ENCODE measurements at regions of chr5 and their contacts with region 1.

Region 1: DNA sequence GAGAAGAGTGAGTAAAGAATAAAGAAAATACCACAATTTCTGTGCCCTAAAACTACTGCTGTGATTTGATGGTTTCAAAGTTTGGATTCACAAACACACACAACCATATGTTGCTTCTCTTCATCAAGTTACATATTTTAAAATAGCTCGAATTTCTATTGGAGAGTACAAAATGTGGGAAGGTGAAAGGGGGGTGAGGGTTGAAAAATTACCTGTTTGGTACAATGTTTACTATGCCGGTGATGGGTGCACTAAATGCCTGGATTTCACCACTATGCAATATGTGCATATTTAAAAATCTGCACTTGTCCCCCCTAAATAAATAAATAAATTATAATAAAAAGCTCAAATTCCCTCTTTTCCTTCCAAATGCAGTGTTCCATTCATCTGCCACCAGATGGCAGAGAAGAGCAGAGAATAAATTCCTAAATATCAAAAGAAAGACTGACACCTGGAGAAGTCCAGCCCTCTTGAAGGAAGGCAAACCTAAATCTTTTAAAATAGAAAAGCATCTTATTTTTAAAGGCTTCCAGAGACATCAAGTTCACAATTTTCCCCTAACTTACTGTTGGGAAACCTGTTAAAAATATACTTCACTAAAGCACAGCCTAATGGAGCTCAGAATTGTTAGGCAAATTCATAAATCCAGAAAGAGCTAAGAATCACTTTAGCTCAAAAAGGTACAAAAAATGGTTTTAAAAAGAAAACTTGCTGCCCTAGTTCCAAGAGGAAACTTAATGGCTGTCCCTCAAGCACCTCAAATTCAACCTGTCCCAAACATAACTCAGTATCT is 24.8 kb upstream of the HNRNPA0 start:
- DNase-seq: peak; percentile 59
- H3K4me3 ChIP-seq: no peak overlapping the region
- H3K27ac ChIP-seq: no peak overlapping the region
- H3K4me1 ChIP-seq: no peaks in the 10 kb centered on the region
- H3K27me3 ChIP-seq: peaks cover 7 to 13% of the 10 kb centered on the region in 2 experiments
- CTCF ChIP-seq: peak; percentile 50 to 51
- POLR2A ChIP-seq: no peak

Region 2: DNA sequence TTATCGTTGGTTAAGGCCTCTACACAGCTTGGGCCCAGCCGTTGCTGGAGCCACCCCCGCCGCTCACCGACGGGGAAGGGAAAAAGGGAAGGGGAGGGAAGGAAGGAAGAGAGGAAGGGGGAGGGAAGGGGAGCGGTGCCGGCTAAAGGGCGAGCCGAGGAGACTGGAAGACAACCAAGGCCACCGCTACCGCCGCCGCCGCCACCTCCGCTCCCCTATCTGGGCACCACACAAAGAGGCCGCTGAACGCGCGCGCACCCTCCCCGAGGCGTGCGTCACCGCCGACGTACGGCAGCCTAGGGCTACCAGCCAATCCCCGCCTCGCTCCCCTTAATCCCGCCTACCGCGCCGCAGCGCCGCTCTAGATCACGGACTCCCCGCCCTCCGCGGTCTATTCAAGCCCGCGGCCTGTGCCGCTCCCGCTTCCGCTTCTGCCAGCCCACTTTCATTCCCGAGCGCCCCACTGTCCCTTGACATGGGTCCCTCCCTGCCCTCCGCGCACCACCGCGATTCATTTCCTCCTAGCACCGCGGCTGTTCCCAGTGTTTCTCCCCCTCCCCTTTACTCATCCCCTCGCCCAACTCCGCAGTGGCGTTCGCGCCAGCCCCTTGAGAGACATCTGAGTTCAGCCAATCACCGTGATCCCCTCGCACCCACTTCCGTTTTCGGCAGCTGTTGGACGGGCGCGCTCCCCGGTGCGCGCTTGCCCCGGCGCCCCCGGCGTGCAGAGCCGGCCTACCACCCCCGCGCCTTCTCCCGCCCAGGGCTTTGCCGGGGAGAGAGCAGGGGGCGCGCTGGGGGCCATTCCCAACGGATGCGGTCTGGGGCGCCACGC is 24.6 kb before region 1 on chr5 and contains the start of gene HNRNPA0:
- CTCF ChIA-PET with region 1: interaction called, 50 read pairs
- POLR2A ChIA-PET with region 1: interaction called, 3 read pairs
- dilution Hi-C with region 1: no loop called
- intact Hi-C with region 1: no loop called
- DNase-seq: peak; percentile 98
- H3K4me3 ChIP-seq: peak within 1 kb of the TSS; percentile 88 to 99 (median 94)
- H3K27ac ChIP-seq: peak within 1 kb of the TSS; percentile 92
- H3K4me1 ChIP-seq: peaks cover 18% of the 10 kb centered on the region
- H3K27me3 ChIP-seq: peaks cover 0 to 2% of the 10 kb centered on the region in 2 experiments
- CTCF ChIP-seq: no peak
- POLR2A ChIP-seq: peak; percentile 97
- total RNA-seq, gene HNRNPA0: 37.5 and 37.9 TPM in 2 replicates

Region 3: DNA sequence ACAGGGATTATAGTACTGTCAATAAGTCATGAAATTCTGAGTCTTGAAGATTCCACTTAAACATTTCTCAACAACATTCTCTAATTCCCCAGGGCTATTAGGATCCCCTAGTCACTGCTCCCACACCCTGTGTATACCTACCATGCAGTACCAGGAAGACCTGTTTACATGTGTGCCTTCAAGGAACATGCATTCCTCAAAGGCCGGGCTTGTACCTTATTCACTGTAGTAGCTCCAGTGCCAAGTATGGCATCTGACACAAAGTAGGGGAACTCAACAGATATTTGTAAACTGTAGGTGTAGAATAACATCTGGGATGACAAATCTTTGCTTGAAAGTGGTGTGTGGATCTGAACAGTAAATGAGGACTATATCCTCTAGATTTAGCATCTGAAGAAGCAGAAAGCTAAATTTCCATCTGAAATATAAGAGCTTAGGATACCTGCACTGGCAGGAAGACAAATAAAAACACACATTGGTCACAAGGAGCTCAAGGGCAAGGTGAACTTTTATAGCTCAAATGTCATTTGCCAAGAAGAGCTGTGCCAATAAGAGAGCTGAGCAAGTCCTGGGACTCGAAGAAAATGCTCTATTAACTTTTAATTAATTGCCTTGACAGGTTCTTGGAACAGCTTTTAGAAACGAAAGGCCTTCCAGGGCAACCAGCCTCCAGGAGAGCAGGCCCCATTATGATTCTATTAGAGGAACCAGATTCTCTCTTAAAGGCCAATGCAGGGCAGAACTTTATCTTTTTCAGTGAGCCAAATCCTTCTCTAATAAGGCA is 36.4 kb after region 1 on chr5:
- CTCF ChIA-PET with region 1: interaction called, 16 read pairs
- POLR2A ChIA-PET with region 1: no interaction called
- dilution Hi-C with region 1: no loop called
- intact Hi-C with region 1: no loop called
- DNase-seq: no peak
- H3K4me3 ChIP-seq: no peak overlapping the region
- H3K27ac ChIP-seq: no peak overlapping the region
- H3K4me1 ChIP-seq: no peaks in the 10 kb centered on the region
- H3K27me3 ChIP-seq: peaks cover 8 to 14% of the 10 kb centered on the region in 2 experiments
- CTCF ChIP-seq: no peak
- POLR2A ChIP-seq: no peak

Region 4: DNA sequence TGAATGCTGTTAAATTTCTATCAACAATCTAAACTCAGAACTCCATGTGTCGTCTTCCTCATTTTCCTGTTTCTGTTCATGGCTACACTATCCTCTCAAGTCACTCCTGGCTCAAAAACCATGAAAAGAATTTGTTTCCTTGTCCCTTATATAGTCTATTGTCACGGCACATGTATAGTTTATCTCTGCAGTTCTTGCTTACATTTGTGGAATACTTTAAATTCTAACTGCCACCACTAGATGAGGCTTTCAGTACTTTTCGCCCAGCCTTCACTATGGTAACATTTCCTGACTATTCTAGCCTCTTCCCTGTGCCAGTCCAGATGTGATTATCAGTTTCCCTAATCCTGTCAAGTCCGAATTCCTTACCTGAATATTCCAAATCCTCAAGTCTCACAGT is 144.9 kb after region 1 on chr5:
- CTCF ChIA-PET with region 1: interaction called, 17 read pairs
- POLR2A ChIA-PET with region 1: no interaction called
- dilution Hi-C with region 1: no loop called
- intact Hi-C with region 1: no loop called
- DNase-seq: peak; percentile 40
- H3K4me3 ChIP-seq: no peak overlapping the region
- H3K27ac ChIP-seq: no peak overlapping the region
- H3K4me1 ChIP-seq: peaks cover 9% of the 10 kb centered on the region
- H3K27me3 ChIP-seq: no peaks in the 10 kb centered on the region
- CTCF ChIP-seq: peak in 1 of 2 donors; percentile 11
- POLR2A ChIP-seq: no peak

Region 5: GRCh38 chr5:137960141-137960540 is 181.2 kb after region 1 on chr5:
- CTCF ChIA-PET with region 1: interaction called, 28 read pairs
- POLR2A ChIA-PET with region 1: no interaction called
- dilution Hi-C with region 1: no loop called
- intact Hi-C with region 1: no loop called
- DNase-seq: peak; percentile 24
- H3K4me3 ChIP-seq: no peak overlapping the region
- H3K27ac ChIP-seq: no peak overlapping the region
- H3K4me1 ChIP-seq: peaks cover 22% of the 10 kb centered on the region
- H3K27me3 ChIP-seq: no peaks in the 10 kb centered on the region
- CTCF ChIP-seq: no peak
- POLR2A ChIP-seq: no peak

Region 6: GRCh38 chr5:138077065-138077696 is 298.2 kb after region 1 on chr5:
- CTCF ChIA-PET with region 1: interaction called, 22 read pairs
- POLR2A ChIA-PET with region 1: no interaction called
- dilution Hi-C with region 1: no loop called
- intact Hi-C with region 1: no loop called
- DNase-seq: peak; percentile 68
- H3K4me3 ChIP-seq: no peak overlapping the region
- H3K27ac ChIP-seq: no peak overlapping the region
- H3K4me1 ChIP-seq: peaks cover 3% of the 10 kb centered on the region
- H3K27me3 ChIP-seq: peaks cover 0 to 8% of the 10 kb centered on the region in 2 experiments
- CTCF ChIP-seq: peak; percentile 74 to 78
- POLR2A ChIP-seq: no peak

Measured in endothelial cell of umbilical vein (primary cell).